B cell (primary cell): ENCODE measurements at regions of chr11 and their contacts with region 1.

Region 1: GRCh38 chr11:250740-251299 is 14.0 kb downstream of the PSMD13 start:
- DNase-seq: peak; percentile 84
- ATAC-seq: peak; percentile 89
- H3K4me3 ChIP-seq: no peak overlapping the region
- H3K4me3 Mint-ChIP-seq: no peak overlapping the region
- H3K27ac ChIP-seq: no peak overlapping the region
- H3K27ac Mint-ChIP-seq: no peak overlapping the region
- H3K4me1 ChIP-seq: peaks cover 0 to 5% of the 10 kb centered on the region in 2 donors
- H3K4me1 Mint-ChIP-seq: peaks cover 7% of the 10 kb centered on the region
- H3K27me3 ChIP-seq: no peaks in the 10 kb centered on the region
- H3K27me3 Mint-ChIP-seq: no peaks in the 10 kb centered on the region
- CTCF ChIP-seq: peak; percentile 79

Region 2: GRCh38 chr11:236774-237767 is 13.7 kb before region 1 on chr11 and contains the start of gene PSMD13:
- CTCF ChIA-PET with region 1: interaction called, 29 read pairs
- POLR2A ChIA-PET with region 1: interaction called, 3 read pairs
- intact Hi-C with region 1: no loop called
- DNase-seq: peak; percentile 91
- ATAC-seq: peak; percentile 77
- H3K4me3 ChIP-seq: peak within 1 kb of the TSS; percentile 89 to 98 (median 95)
- H3K4me3 Mint-ChIP-seq: peak within 1 kb of the TSS; percentile 99
- H3K27ac ChIP-seq: peak within 1 kb of the TSS; percentile 94 to 99
- H3K27ac Mint-ChIP-seq: peak within 1 kb of the TSS; percentile 100
- H3K4me1 ChIP-seq: peaks cover 18 to 22% of the 10 kb centered on the region in 2 donors
- H3K4me1 Mint-ChIP-seq: peaks cover 38% of the 10 kb centered on the region
- H3K27me3 ChIP-seq: no peaks in the 10 kb centered on the region
- H3K27me3 Mint-ChIP-seq: no peaks in the 10 kb centered on the region
- CTCF ChIP-seq: no peak
- total RNA-seq, gene PSMD13: 96.2 and 104 TPM in 2 replicates

Region 3: GRCh38 chr11:288328-289144 is 37.7 kb after region 1 on chr11 and contains the start of gene PGGHG:
- CTCF ChIA-PET with region 1: interaction called, 35 read pairs
- POLR2A ChIA-PET with region 1: no interaction called
- intact Hi-C with region 1: no loop called
- DNase-seq: peak; percentile 64
- ATAC-seq: peak; percentile 91
- H3K4me3 ChIP-seq: peak within 1 kb of the TSS; percentile 62 to 78 (median 72)
- H3K4me3 Mint-ChIP-seq: peak within 1 kb of the TSS; percentile 89
- H3K27ac ChIP-seq: peak within 1 kb of the TSS in 1 of 2 donors; percentile 55
- H3K27ac Mint-ChIP-seq: peak within 1 kb of the TSS; percentile 83
- H3K4me1 ChIP-seq: peaks cover 18 to 25% of the 10 kb centered on the region in 2 donors
- H3K4me1 Mint-ChIP-seq: peaks cover 20% of the 10 kb centered on the region
- H3K27me3 ChIP-seq: peaks cover 0 to 25% (median 6%) of the 10 kb centered on the region in 4 experiments
- H3K27me3 Mint-ChIP-seq: peaks cover 13% of the 10 kb centered on the region
- CTCF ChIP-seq: no peak
- total RNA-seq, gene PGGHG: 159 and 169 TPM in 2 replicates

Region 4: DNA sequence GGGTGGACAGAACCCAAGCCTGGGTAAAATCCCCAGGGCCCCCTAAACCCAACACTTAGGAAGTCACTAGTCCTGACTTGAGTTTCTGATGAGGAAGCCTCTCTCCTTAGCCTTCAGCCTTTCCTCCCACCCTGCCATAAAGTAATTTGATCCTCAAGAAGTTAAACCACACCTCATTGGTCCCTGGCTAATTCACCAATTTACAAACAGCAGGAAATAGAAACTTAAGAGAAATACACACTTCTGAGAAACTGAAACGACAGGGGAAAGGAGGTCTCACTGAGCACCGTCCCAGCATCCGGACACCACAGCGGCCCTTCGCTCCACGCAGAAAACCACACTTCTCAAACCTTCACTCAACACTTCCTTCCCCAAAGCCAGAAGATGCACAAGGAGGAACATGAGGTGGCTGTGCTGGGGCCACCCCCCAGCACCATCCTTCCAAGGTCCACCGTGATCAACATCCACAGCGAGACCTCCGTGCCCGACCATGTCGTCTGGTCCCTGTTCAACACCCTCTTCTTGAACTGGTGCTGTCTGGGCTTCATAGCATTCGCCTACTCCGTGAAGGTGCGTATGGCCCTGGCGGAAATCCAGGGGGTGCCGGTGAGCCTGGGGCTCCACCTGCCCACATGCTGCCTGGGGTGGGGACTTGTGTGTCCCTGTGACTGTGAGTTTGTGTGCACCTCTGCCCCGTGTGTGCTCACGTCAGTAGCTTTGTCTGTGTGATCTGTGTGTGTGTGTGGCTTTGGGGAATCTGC is 63.1 kb after region 1 on chr11 and contains the start of gene IFITM1:
- CTCF ChIA-PET with region 1: interaction called, 21 read pairs
- POLR2A ChIA-PET with region 1: interaction called, 4 read pairs
- intact Hi-C with region 1: no loop called
- DNase-seq: peak; percentile 78
- ATAC-seq: peak; percentile 37
- H3K4me3 ChIP-seq: peak within 1 kb of the TSS; percentile 44 to 79 (median 60)
- H3K4me3 Mint-ChIP-seq: peak within 1 kb of the TSS; percentile 93
- H3K27ac ChIP-seq: peak within 1 kb of the TSS; percentile 84 to 89
- H3K27ac Mint-ChIP-seq: peak within 1 kb of the TSS; percentile 94
- H3K4me1 ChIP-seq: peaks cover 42 to 65% of the 10 kb centered on the region in 2 donors
- H3K4me1 Mint-ChIP-seq: peaks cover 55% of the 10 kb centered on the region
- H3K27me3 ChIP-seq: no peaks in the 10 kb centered on the region
- H3K27me3 Mint-ChIP-seq: no peaks in the 10 kb centered on the region
- CTCF ChIP-seq: no peak
- total RNA-seq, gene IFITM1: 19.5 and 19.7 TPM in 2 replicates

Region 5: GRCh38 chr11:355581-356458 is 105.0 kb after region 1 on chr11:
- CTCF ChIA-PET with region 1: interaction called, 82 read pairs
- POLR2A ChIA-PET with region 1: interaction called, 9 read pairs
- intact Hi-C with region 1: loop called (anchors 2 kb)
- DNase-seq: peak; percentile 85
- ATAC-seq: peak; percentile 56
- H3K4me3 ChIP-seq: peak overlapping the region in 4 of 5 experiments; percentile 41 to 53 (median 43)
- H3K4me3 Mint-ChIP-seq: peak overlapping the region; percentile 88
- H3K27ac ChIP-seq: peak overlapping the region; percentile 81 to 85
- H3K27ac Mint-ChIP-seq: peak overlapping the region; percentile 90
- H3K4me1 ChIP-seq: peaks cover 13 to 20% of the 10 kb centered on the region in 2 donors
- H3K4me1 Mint-ChIP-seq: peaks cover 18% of the 10 kb centered on the region
- H3K27me3 ChIP-seq: no peaks in the 10 kb centered on the region
- H3K27me3 Mint-ChIP-seq: no peaks in the 10 kb centered on the region
- CTCF ChIP-seq: no peak

Region 6: GRCh38 chr11:447923-448731 is 197.3 kb after region 1 on chr11:
- CTCF ChIA-PET with region 1: interaction called, 18 read pairs
- POLR2A ChIA-PET with region 1: interaction called, 5 read pairs
- intact Hi-C with region 1: no loop called
- DNase-seq: peak; percentile 95
- ATAC-seq: peak; percentile 73
- H3K4me3 ChIP-seq: peak overlapping the region; percentile 53 to 85 (median 69)
- H3K4me3 Mint-ChIP-seq: peak overlapping the region; percentile 98
- H3K27ac ChIP-seq: peak overlapping the region; percentile 88 to 93
- H3K27ac Mint-ChIP-seq: peak overlapping the region; percentile 96
- H3K4me1 ChIP-seq: peaks cover 29 to 43% of the 10 kb centered on the region in 2 donors
- H3K4me1 Mint-ChIP-seq: peaks cover 26% of the 10 kb centered on the region
- H3K27me3 ChIP-seq: no peaks in the 10 kb centered on the region
- H3K27me3 Mint-ChIP-seq: no peaks in the 10 kb centered on the region
- CTCF ChIP-seq: peak; percentile 74